Heart right ventricle (tissue), 16 donors: ENCODE measurements at regions of chr5 and their contacts with region 1.

Region 1: DNA sequence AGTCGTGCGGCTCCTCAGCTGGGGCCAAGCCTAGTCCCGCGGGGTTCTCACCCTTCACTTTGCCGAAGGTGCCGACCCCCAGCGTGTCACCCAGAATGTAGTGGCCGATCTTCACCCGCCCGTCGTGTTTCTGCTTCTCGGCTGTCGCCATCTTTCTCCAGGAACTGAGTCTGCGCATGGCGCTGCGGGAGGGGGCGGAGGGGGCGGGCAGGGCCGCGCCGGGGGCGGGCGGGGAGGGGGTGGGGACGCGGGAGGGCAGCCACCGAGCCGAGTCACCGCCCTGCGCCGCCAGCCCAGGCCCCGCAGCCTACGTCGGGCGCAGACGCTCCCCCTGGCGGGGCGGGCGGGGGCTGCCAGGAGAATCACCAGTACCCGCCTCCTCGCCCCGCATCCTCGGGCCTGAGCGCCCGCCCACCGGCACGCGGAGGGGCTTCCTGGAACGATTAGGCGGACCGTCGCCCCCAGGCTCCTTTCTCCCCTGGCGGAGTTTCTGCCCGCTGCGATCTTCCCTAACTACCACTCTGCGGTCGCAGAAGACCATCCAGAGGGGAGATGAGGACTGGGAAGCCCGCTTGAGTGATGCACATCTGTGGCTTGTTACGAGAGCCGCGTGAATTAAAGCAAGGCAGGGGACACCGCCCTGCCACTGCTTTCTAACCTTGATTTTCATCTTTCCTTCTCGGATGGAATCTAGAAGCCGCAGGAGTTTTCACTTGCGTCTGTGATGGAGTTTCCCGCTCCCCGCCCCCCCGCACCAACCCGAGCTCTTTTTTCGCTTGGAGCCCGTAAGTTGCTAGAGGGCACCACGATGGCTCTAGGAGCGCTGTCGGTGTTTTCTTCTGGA is at the start of gene PRKAA1:
- DNase-seq: peak; percentile 87 to 92
- ATAC-seq: peak; percentile 93 to 98 (median 94)
- H3K4me3 ChIP-seq: peak within 1 kb of the TSS; percentile 74 to 99 (median 93)
- H3K27ac ChIP-seq: peak within 1 kb of the TSS; percentile 28 to 96 (median 94)
- H3K4me1 ChIP-seq: peaks cover 0 to 44% (median 27%) of the 10 kb centered on the region in 9 donors
- H3K27me3 ChIP-seq: no peaks in the 10 kb centered on the region
- CTCF ChIP-seq: peak; percentile 56 to 89 (median 76)
- total RNA-seq, gene PRKAA1: 37.2 to 53.2 (median 42.7) TPM

Region 2: GRCh38 chr5:40755407-40756365 is 42.5 kb before region 1 on chr5 and contains the start of gene TTC33:
- intact Hi-C with region 1: loop called in 3 of 10 experiments (anchors 1 to 2 kb)
- DNase-seq: peak; percentile 94 to 96
- ATAC-seq: peak; percentile 98 to 99 (median 98)
- H3K4me3 ChIP-seq: peak within 1 kb of the TSS; percentile 65 to 98 (median 86)
- H3K27ac ChIP-seq: peak within 1 kb of the TSS; percentile 70 to 94 (median 89)
- H3K4me1 ChIP-seq: peaks cover 0 to 24% (median 17%) of the 10 kb centered on the region in 9 donors
- H3K27me3 ChIP-seq: no peaks in the 10 kb centered on the region
- CTCF ChIP-seq: peak; percentile 39 to 89 (median 72)
- total RNA-seq, gene TTC33: 12.9 to 20.1 (median 17.9) TPM

Region 3: DNA sequence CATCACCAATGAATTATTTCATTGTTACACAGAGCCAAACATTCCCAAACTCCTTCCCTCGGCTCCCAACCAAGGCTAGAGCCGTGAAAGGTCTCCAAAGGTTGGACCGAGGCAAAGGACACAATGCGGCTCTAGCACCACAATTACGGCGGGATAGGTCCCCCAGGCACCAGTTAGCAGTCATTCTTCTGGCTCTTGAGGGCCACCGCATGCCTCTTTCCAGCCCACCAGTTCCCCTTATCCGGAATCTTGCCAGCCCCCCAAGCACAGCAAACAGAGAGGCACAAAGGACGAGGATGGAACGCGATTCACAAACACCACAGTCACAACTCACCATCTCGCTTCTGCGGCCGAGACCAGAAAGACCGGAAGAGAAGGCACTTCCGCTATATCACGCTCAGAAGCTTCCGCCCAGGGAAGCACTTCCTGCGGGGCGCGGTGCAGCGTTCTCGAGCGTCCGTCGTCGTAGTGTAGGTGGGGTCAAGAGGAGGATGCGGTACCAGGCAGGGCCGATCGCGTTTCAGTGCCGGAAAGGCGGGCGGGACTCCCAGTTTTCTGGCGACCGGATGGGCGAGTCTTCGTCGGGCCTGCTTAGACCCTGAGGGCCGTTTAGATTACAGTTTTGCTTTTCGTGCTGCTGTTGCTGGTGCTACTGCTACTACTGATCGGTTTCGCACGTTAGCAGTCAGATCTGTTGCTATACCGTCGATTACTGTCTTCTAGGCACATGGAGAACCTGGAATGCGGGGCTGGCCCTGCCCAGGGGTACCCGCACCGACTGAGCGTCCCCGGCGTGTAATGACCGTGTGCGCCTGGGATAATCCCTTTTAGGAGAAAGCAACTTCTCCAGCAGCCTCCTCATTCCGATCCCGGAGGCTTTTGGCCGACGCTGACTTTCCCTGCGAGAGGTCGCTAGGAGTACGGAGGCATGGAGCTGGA is 36.9 kb after region 1 on chr5 and contains the start of gene RPL37:
- intact Hi-C with region 1: loop called in 1 of 10 experiments (anchors 2 kb)
- DNase-seq: peak; percentile 96 to 98
- ATAC-seq: peak; percentile 99 to 100 (median 99)
- H3K4me3 ChIP-seq: peak within 1 kb of the TSS; percentile 24 to 88 (median 74)
- H3K27ac ChIP-seq: peak within 1 kb of the TSS; percentile 93 to 99 (median 96)
- H3K4me1 ChIP-seq: peaks cover 2 to 38% (median 24%) of the 10 kb centered on the region in 9 donors
- H3K27me3 ChIP-seq: no peaks in the 10 kb centered on the region
- CTCF ChIP-seq: no peak
- total RNA-seq, gene RPL37: 530 to 829 (median 577) TPM